ENCODE measurements at regions of chr18 and their contacts with region 1.

Region 1: DNA sequence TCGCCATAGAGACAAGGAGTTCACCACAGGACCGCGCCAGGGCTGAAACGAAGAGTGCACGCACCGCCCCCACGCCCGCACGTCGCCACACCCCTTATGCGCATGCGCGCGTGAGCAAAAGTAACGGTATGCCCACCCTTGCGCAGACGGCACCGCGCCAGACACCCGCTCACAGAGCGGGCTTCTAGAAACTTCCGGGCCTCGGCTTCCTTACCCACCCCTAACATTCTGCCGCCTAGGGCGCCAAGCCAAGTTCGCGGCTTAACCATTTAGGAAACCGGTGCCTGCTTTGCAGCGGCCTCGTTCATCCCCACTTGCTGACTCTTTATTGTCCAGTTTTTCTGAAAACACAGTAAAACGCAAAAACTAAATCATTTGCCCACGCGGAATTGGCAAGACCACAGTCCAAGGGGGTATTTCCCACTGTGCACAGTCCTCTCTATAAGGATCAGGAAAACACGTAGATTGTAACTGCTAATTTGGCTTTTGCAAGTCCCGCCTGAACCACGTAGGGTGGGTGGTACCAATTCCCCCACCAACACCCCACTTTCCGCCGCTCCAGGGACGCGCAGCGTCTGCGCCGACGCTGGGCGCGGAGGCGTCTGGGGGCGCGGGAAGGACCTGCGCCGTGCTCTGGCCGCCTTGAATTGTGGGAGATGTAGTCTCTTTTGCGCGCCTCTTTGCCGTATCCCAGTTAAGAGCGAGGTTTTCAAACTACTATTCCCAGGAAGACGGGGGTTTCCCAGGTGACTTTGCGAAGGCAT is at the starts of genes FBXO15 and TIMM21:
- DNase-seq: peak; percentile 90 to 93
- H3K4me3 ChIP-seq: peak within 1 kb of the TSS; percentile 80
- H3K27ac ChIP-seq: peak within 1 kb of the TSS; percentile 14; the same call in 1 of the 2 replicates
- H3K4me1 ChIP-seq: peaks cover 16% of the 10 kb centered on the region
- H3K27me3 ChIP-seq: no peaks in the 10 kb centered on the region
- CTCF ChIP-seq: no peak
- total RNA-seq, gene FBXO15: 2.2 and 3.9 TPM in 2 replicates
- total RNA-seq, gene TIMM21: 17.9 and 32.6 TPM in 2 replicates

Region 2: GRCh38 chr18:74116633-74117554 is 31.1 kb before region 1 on chr18:
- CTCF ChIA-PET with region 1: interaction called, 10 read pairs
- POLR2A ChIA-PET with region 1: no interaction called
- intact Hi-C with region 1: no loop called
- DNase-seq: no peak
- H3K4me3 ChIP-seq: no peak overlapping the region
- H3K27ac ChIP-seq: no peak overlapping the region
- H3K4me1 ChIP-seq: no peaks in the 10 kb centered on the region
- H3K27me3 ChIP-seq: no peaks in the 10 kb centered on the region; the same call in 1 of the 2 replicates
- CTCF ChIP-seq: peak; percentile 86

Region 3: DNA sequence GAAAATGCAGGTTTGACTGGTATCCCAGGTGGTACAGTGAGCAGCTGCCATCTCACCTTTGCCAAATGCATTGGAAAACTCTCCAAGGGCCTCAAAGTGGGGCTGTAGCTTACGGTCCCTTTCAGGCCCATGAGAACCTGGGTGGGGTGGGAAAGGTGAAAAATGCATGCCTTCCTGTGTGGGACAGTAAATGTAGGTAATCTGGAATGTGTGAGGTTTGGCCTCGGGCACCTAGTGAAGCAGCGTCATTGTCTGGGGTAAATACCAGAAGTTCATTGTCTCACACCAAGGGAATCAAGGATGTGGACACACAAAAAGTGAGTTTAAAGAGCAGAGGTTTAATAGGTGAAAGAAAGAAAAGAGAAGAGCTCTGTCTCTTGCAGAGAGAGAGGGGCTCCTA is 36.9 kb after region 1 on chr18:
- CTCF ChIA-PET with region 1: no interaction called
- POLR2A ChIA-PET with region 1: no interaction called
- intact Hi-C with region 1: loop called (anchors 1 kb)
- DNase-seq: peak; percentile 73 to 87
- H3K4me3 ChIP-seq: no peak overlapping the region
- H3K27ac ChIP-seq: peak overlapping the region; percentile 26; the same call in 1 of the 2 replicates
- H3K4me1 ChIP-seq: peaks cover 22% of the 10 kb centered on the region
- H3K27me3 ChIP-seq: no peaks in the 10 kb centered on the region
- CTCF ChIP-seq: no peak

Region 4: DNA sequence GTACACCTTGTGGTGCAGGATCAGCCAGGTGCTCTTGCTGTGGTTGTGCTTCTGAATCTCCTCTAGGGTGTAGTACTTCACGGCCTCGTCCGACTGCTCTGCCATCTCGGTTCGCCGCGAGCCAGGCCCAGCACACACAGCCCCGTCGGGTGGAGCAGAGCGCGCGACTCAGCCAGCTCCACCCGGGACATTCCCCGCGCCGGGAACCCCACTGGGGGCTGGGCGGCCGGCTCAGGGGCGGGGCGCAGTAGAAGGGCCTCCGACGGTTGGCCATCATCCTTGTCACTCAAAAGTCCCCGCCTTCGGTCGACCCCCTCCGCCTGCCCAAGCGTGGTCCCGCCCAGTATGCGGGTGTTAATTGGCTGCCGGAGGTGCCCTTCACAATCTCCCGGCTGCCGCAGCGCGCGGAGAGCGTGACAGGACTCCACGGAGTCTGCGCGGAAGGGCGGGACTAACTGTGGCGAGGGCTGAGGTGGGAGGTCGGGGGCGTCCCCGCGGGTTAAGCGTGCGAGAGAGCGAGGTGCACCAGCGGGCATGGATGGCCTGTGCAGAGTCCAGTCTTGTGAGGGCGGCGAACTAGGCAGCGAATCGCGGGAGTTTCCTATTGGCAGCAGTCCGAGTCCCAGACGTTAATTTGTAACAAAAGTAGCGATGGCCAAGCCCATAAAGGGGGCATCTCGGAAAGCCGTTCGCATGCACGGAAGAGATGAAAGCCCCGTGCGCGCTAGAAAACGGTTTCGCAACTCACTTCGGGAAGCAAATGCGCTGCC is 144.0 kb after region 1 on chr18 and contains the start of gene CYB5A:
- CTCF ChIA-PET with region 1: no interaction called
- POLR2A ChIA-PET with region 1: no interaction called
- intact Hi-C with region 1: loop called (anchors 5 kb)
- DNase-seq: peak; percentile 88 to 98
- H3K4me3 ChIP-seq: peak within 1 kb of the TSS; percentile 81
- H3K27ac ChIP-seq: 0 out of 2 replicates have a peak within 1 kb of the TSS, but pooled peaks have one; percentile 13
- H3K4me1 ChIP-seq: peaks cover 45% of the 10 kb centered on the region
- H3K27me3 ChIP-seq: no peaks in the 10 kb centered on the region
- CTCF ChIP-seq: peak; percentile 43; the same call in 1 of the 2 replicates
- total RNA-seq, gene CYB5A: 105 and 109 TPM in 2 replicates

Region 5: DNA sequence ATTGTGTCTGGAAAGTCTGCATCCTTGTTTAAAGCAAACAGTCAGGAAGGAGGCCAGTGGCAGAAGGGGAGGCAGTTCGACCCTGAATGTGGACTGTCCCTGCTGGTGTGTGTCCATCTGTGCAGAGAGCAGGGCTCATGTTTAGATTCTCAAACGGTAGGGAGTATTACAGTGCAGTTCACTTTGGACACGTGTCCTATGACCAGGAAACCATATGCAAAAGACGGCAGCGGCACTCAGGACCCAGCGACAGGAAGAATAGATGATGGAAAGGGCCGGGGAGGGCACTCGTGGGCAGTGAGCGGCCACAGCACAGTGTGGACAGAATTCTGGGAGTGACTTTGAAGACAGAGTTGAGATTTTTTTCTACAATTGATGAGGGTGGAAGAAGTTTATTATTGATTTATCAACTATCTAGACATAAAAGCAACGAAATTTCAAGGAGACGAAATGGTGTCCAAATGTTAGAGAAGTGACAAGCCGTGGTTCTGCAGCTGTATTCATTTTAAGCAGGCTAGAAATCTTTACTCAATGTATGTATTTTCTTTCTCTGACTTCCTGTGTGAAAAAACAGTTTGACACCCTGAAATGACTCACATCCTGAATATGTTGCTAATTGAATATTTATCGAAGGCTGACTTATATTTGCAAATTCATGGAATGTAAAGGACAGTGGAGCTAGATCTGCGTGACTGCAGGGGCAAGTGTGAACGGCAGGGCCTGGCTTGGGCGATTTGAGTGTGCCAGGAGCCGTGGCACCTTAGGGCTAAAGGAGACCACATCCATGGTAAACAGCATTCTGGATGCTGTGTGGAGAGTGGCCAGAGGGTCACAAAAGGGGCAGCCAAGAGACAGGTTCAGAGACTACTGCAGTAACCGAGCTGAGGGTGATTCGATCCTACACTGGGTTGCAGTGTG is 846.8 kb after region 1 on chr18:
- CTCF ChIA-PET with region 1: no interaction called
- POLR2A ChIA-PET with region 1: no interaction called
- intact Hi-C with region 1: no loop called
- DNase-seq: peak; percentile 13 to 73
- H3K4me3 ChIP-seq: no peak overlapping the region
- H3K27ac ChIP-seq: no peak overlapping the region
- H3K4me1 ChIP-seq: peaks cover 11% of the 10 kb centered on the region
- H3K27me3 ChIP-seq: no peaks in the 10 kb centered on the region
- CTCF ChIP-seq: no peak